Transverse colon (tissue), 4 donors: ENCODE measurements at regions of chr5 and their contacts with region 1.

Region 1: DNA sequence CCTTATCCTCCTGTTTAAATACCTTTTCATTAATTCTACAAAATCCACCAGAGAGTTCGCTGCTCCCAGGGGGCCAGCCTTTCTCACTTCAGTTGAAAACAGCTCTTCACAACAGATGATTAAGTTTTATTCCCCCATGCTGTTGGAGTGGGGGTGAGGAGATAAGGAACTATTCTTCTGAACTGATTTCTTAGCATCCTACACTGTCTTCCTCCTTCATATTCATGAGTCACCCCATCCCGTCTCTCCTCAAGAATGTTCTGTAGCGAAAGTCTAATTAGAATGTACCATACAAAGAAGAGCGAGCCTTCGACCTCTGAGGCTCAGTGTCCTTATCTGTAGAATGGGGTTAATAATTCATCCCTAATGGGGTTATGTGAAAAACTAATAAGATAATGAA is 138.0 kb downstream of the PIK3R1 start:
- DNase-seq: no peak
- H3K4me3 ChIP-seq: no peak overlapping the region
- H3K27ac ChIP-seq: no peak overlapping the region
- H3K4me1 ChIP-seq: no peaks in the 10 kb centered on the region
- H3K27me3 ChIP-seq: no peaks in the 10 kb centered on the region
- CTCF ChIP-seq: no peak
- EP300 ChIP-seq: no peak
- POLR2A ChIP-seq: no peak

Region 2: DNA sequence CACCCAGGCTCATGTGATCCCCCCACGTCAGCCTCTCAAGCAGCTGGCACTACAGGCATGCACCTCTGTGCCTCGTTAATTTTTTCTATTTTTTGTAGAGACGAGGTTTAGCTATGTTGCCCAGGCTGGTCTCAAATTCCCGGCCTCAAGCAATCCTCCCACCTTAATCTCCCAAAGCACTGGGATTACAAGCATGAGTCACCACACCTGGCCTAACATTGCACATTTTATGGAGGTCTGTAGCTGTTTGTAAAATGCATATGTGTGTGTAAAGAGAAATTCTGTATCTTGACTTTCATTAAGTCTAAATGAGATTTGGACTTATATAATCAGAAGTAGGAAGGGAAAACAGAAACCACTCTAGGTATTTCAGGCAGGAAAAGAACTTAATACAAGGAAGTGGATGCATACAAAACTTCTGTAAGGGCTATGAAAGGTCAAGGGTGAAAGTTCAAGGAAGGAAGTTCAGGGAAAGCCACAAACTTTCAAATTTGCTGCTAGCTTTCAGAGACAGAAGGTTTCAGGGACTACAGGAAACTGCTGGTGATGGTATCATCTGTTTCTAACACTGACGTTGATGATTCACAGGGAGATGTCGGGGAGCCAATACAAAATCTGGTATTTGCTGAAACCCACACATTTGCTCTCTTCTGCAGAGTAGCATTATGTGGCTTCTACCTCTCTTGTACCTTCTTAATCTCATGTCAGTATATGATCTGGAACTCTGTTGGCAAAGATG is 71.4 kb after region 1 on chr5:
- in situ Hi-C with region 1: no loop called
- intact Hi-C with region 1: loop called (anchors 10 kb)
- DNase-seq: no peak
- H3K4me3 ChIP-seq: no peak overlapping the region
- H3K27ac ChIP-seq: peak overlapping the region; percentile 23 to 52 (median 44)
- H3K4me1 ChIP-seq: peaks cover 3 to 39% (median 22%) of the 10 kb centered on the region in 4 donors
- H3K27me3 ChIP-seq: no peaks in the 10 kb centered on the region
- CTCF ChIP-seq: no peak
- EP300 ChIP-seq: no peak
- POLR2A ChIP-seq: no peak